ENCODE measurements at regions of chr16 and their contacts with region 1.

Region 1: DNA sequence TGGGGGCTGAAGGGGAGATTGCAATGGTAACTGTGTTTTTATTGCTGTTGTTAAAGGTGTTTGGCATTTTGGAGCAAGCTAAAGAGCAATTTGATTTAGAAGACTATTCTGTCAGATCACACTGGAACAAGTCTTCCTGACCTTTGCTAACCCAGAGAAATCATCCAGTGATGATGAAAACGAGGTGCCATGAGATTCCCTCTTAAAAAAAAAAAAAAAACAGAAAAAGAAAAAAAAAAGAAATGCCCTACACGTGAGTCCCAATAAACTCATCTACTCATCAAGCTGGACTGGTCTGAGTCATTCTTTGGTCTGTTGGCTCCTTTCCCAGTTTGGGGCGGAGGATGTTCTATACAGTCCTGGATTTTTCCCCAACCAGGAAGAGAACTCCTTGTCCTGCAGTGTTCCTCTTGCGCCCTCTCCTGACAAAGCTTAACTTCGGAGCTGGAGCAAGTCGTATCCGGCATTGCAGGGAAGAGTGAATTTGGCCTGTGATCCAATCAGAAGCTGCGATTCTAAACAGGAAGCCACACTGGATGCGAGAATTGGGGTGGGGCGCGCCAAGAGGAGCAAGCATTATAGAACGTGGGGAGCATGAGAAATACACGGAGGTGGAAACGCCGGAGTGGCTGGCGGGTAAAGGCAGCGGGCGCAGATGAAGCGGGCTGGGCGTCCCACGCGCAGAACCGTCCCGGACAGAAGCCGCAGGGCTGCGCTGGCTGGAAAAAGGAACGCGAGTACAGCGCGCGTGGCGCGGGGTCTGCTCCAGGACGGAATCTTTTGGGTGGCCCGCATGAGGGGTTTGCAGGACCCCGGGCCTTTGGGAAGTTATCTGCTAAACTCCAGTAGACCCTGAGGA is 22.4 kb upstream of the CRYM start:
- DNase-seq: peak; percentile 64 to 96 (median 90)
- H3K4me3 ChIP-seq: peak overlapping the region; percentile 40 to 77 (median 61)
- H3K27ac ChIP-seq: peak overlapping the region in 16 of 59 donors; percentile 10 to 74 (median 48)
- H3K27me3 ChIP-seq: peaks cover 0 to 15% (median 0%) of the 10 kb centered on the region in 45 donors
- CTCF ChIP-seq: peak; percentile 49 to 93 (median 84)

Region 2: DNA sequence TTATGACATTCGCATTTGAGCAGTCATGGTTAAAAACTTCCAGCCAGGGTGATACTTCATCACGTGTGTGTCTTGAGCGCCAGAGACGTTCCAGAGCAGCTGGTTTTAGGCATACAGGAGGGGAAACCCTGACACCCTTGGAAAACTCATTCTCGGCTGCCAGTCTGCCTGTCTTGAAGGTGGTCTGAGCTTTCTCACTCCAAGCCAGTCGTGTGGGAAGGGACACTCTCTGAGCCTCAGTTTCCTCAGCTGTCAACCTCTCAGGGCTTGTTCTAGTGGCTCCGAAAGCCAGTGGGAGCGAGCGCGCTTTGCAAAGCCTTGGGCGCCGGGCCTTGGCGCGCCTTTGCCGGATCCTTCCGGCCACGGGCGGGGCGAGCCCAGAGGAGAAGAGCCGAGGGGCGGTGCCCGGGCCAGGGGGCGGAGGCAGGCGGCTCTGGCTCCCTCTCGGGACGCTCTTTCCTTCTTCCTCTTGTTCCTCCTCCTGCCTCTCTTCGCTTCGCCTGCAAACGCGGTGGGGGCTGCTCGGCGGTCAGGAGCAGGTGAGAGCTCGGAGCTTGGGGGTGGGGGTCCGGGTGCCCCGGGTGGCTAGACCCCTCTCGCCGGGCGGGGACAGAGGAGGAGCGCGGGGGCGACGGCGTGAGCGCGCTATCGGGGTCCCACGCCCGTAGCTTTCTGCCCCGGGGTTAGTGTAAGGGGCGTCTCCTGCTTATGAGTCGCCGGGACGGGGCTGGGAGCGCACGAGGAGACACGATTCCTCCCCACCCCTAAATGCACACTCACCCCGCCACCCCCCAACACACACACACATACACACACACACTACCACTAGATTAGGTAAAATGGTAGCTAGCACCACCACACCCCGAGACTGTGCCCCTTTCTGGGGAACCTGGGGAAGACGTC is 142.1 kb before region 1 on chr16 and contains the start of gene LDAF1:
- intact Hi-C with region 1: loop called (anchors 10 kb)
- DNase-seq: peak in 7 of 10 donors; percentile 25 to 78 (median 55)
- H3K4me3 ChIP-seq: peak within 1 kb of the TSS; percentile 39 to 76 (median 63)
- H3K27ac ChIP-seq: peak within 1 kb of the TSS in 6 of 59 donors; percentile 16 to 67 (median 50)
- H3K27me3 ChIP-seq: peaks cover 0 to 17% (median 0%) of the 10 kb centered on the region in 45 donors
- CTCF ChIP-seq: peak in 6 of 56 donors; percentile 8 to 19 (median 14)
- total RNA-seq, gene LDAF1: 1.5 to 14.0 (median 5.4) TPM

Region 3: GRCh38 chr16:21184834-21185233 is 115.7 kb before region 1 on chr16:
- intact Hi-C with region 1: loop called (anchors 1 to 2 kb)
- DNase-seq: no peak
- H3K4me3 ChIP-seq: no peak overlapping the region
- H3K27ac ChIP-seq: no peak overlapping the region
- H3K27me3 ChIP-seq: no peaks in the 10 kb centered on the region
- CTCF ChIP-seq: no peak

Region 4: GRCh38 chr16:21554795-21555585 is 254.5 kb after region 1 on chr16:
- intact Hi-C with region 1: loop called in 1 of 2 experiments (anchors 10 kb)
- DNase-seq: peak; percentile 86 to 96 (median 93)
- H3K4me3 ChIP-seq: peak overlapping the region in 56 of 59 donors; percentile 1 to 55 (median 37)
- H3K27ac ChIP-seq: peak overlapping the region in 13 of 59 donors; percentile 0 to 69 (median 29)
- H3K27me3 ChIP-seq: peaks cover 0 to 6% (median 0%) of the 10 kb centered on the region in 45 donors
- CTCF ChIP-seq: peak; percentile 93 to 100 (median 100)

Measured in dorsolateral prefrontal cortex (tissue), 120 donors.